Spleen (tissue), 13 donors: ENCODE measurements at regions of chr20 and their contacts with region 1.

Region 1: DNA sequence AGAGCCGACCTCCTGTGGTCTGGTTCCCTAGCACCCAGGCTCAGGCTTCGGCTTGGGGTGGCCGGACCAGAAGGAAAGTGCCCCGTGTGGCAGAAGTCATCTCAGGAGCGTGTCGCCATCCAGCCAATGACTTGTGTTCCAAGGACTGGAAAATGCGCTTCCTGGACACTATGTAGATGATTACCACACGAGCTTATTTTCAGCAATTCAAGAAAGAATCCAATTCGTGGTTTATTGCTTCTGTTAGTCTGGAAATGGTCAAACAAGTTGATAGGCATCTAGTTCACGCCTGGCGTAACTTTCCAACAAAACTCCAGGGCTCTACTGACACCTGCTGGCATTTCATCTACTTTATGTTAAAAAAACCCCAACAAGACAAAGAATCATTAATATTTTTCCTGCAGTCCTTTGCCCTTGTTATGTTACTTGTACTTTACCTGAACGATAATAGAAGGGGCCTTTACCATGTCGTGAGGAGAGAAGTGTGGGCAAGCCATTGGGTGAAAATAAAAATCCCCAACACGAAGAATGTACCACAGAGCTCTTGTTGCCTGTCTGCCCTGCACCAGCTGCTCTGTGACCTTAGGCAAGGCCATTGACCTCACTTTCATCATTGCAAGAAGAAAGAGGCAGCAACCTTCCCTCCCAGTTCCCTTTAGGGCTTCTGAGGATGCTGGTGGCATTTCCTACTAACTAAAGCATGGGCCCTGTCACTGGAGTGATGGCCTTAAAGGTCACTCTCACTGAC is 154.7 kb upstream of the LAMP5 start:
- DNase-seq: no peak
- H3K4me3 ChIP-seq: no peak overlapping the region
- H3K27ac ChIP-seq: no peak overlapping the region
- H3K4me1 ChIP-seq: peaks cover 0 to 9% (median 2%) of the 10 kb centered on the region in 6 donors
- H3K27me3 ChIP-seq: no peaks in the 10 kb centered on the region
- CTCF ChIP-seq: peak in 6 of 11 experiments; percentile 11 to 41 (median 23)
- POLR2A ChIP-seq: no peak

Region 2: GRCh38 chr20:8790442-8791074 is 569.2 kb before region 1 on chr20:
- intact Hi-C with region 1: loop called (anchors 2 kb)
- DNase-seq: no peak
- H3K4me3 ChIP-seq: no peak overlapping the region
- H3K27ac ChIP-seq: no peak overlapping the region
- H3K4me1 ChIP-seq: no peaks in the 10 kb centered on the region
- H3K27me3 ChIP-seq: no peaks in the 10 kb centered on the region
- CTCF ChIP-seq: peak in 9 of 11 experiments; percentile 40 to 80 (median 68)
- POLR2A ChIP-seq: no peak

Region 3: GRCh38 chr20:8853805-8854338 is 505.9 kb before region 1 on chr20:
- intact Hi-C with region 1: loop called (anchors 10 kb)
- DNase-seq: no peak
- H3K4me3 ChIP-seq: no peak overlapping the region
- H3K27ac ChIP-seq: peak overlapping the region in 2 of 8 donors; percentile 39 to 41
- H3K4me1 ChIP-seq: peaks cover 0 to 8% (median 0%) of the 10 kb centered on the region in 6 donors
- H3K27me3 ChIP-seq: no peaks in the 10 kb centered on the region
- CTCF ChIP-seq: peak; percentile 45 to 79 (median 74)
- POLR2A ChIP-seq: no peak